Dendritic cell treated with granulocyte-macrophage colony-stimulating factor and Interleukin-4, amounts not matched to agents 40 ng/mL and 50 ng/mL, for 4 days (primary cell): ENCODE measurements at regions of chr10 and their contacts with region 1.

Region 1: GRCh38 chr10:28241741-28242399 is 61.0 kb downstream of the MPP7 start:
- H3K4me3 Mint-ChIP-seq: no peak overlapping the region
- H3K27ac Mint-ChIP-seq: no peak overlapping the region
- H3K4me1 Mint-ChIP-seq: peaks cover 10% of the 10 kb centered on the region
- H3K27me3 Mint-ChIP-seq: no peaks in the 10 kb centered on the region

Region 2: GRCh38 chr10:27446091-27446918 is 795.6 kb before region 1 on chr10:
- intact Hi-C with region 1: loop called (anchors 5 kb)
- H3K4me3 Mint-ChIP-seq: no peak overlapping the region
- H3K27ac Mint-ChIP-seq: peak overlapping the region; percentile 47
- H3K4me1 Mint-ChIP-seq: peaks cover 17% of the 10 kb centered on the region
- H3K27me3 Mint-ChIP-seq: no peaks in the 10 kb centered on the region

Region 3: DNA sequence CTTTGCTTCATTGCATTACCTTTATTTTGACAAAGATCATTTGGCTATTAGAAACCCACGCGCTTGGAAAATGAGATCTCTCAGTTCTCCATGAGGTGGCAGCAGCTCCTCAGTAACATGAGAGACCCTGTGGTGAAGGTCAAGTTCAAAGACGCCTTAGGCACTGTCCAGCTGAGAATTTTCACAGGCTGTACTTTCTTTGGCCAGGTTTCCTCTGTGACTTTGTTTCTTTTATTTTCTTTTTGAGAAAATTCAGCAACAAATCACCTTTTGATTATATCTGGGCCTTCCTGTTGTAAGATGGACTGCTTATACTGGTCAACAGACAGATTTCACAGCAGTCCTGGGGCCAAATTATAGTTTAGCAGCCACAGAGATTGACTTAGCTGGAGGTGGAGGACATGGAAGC is 683.3 kb before region 1 on chr10:
- intact Hi-C with region 1: loop called (anchors 5 kb)
- H3K4me3 Mint-ChIP-seq: no peak overlapping the region
- H3K27ac Mint-ChIP-seq: no peak overlapping the region
- H3K4me1 Mint-ChIP-seq: no peaks in the 10 kb centered on the region
- H3K27me3 Mint-ChIP-seq: peaks cover 2% of the 10 kb centered on the region

Region 4: GRCh38 chr10:27742195-27743011 is 499.5 kb before region 1 on chr10:
- intact Hi-C with region 1: loop called (anchors 5 kb)
- H3K4me3 Mint-ChIP-seq: peak overlapping the region; percentile 78
- H3K27ac Mint-ChIP-seq: no peak overlapping the region
- H3K4me1 Mint-ChIP-seq: peaks cover 53% of the 10 kb centered on the region
- H3K27me3 Mint-ChIP-seq: peaks cover 76% of the 10 kb centered on the region

Region 5: DNA sequence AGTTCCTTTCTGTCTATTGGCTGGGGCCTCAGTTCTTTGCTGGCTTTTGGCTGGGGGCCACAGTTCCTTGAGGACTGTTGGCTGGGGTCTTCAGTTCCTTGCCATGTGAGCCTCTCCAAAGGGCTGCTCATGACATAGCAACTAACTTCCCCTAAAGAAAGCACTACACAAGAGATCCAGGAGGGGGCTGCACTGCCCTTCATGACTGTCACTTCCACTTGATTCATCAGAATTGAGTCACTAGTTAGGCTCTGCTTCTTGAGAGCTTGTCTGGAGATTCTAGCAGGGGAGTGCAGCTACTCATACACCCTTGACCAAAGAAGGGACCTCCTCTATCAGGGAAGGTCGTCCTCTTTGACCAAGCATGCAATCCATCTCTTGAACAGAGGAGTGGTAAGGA is 458.2 kb before region 1 on chr10:
- intact Hi-C with region 1: loop called (anchors 1 kb)
- H3K4me3 Mint-ChIP-seq: no peak overlapping the region
- H3K27ac Mint-ChIP-seq: no peak overlapping the region
- H3K4me1 Mint-ChIP-seq: no peaks in the 10 kb centered on the region
- H3K27me3 Mint-ChIP-seq: peaks cover 7% of the 10 kb centered on the region